Mammary epithelial cell (primary cell): ENCODE measurements at regions of chr4 and their contacts with region 1.

Region 1: GRCh38 chr4:113899271-113900070 is 80.0 kb downstream of the ARSJ start:
- DNase-seq: peak; percentile 45
- H3K4me3 ChIP-seq: no peak overlapping the region
- H3K27ac ChIP-seq: no peak overlapping the region
- H3K4me1 ChIP-seq: peaks cover 9% of the 10 kb centered on the region
- H3K27me3 ChIP-seq: no peaks in the 10 kb centered on the region
- CTCF ChIP-seq: no peak

Region 2: DNA sequence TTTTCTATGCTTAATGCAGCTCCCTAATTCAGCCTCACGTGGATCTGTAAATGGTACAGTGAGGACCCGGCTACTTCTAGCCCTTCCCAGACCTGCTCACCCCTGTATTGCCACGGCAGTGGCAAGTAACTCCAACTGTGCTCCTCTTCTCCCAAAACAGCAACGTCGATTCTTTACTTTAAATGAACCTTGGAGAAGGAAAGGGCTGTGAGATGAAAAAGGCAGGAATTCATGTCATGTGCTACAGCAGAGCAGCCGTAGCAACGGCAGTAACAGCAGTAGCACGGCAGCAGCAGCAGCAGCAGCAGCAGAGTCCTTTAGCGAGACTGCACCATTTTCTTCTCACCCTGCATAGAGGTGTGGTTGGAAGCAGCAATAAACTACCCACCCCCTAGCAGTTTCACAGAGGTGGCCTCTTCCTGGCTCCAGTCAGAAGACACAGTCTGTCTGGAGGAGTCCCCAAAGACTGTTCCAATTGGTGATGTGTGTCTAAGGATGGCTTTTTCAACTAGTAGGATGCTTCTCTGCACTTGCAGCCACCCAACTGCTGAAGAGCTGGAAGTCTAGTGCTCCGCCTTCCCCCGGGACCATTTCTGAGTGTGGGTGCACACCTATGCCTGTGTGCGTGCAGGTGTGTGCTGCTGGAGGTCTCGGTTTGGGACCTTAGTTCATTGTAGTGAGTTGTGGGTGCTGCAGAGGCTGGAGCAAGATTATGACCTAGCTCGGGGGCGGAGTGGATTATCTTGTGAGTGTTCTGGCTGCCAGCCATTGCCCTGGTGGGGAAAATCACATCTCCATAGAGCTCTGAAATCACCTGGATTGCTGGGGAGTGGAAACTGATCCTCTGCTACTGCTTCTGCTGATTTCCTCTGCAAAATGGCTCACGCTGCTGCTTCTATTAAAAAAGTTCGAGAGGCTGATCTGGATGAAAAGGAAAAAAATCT is 782.8 kb before region 1 on chr4:
- CTCF ChIA-PET with region 1: no interaction called
- dilution Hi-C with region 1: no loop called
- in situ Hi-C with region 1: no loop called
- intact Hi-C with region 1: no loop called
- DNase-seq: no peak
- H3K4me3 ChIP-seq: no peak overlapping the region
- H3K27ac ChIP-seq: no peak overlapping the region
- H3K4me1 ChIP-seq: no peaks in the 10 kb centered on the region
- H3K27me3 ChIP-seq: peaks cover 19% of the 10 kb centered on the region
- CTCF ChIP-seq: no peak

Region 3: GRCh38 chr4:113593400-113594230 is 305.9 kb before region 1 on chr4:
- CTCF ChIA-PET with region 1: no interaction called
- dilution Hi-C with region 1: no loop called
- in situ Hi-C with region 1: no loop called
- intact Hi-C with region 1: no loop called
- DNase-seq: no peak
- H3K4me3 ChIP-seq: no peak overlapping the region
- H3K27ac ChIP-seq: no peak overlapping the region
- H3K4me1 ChIP-seq: no peaks in the 10 kb centered on the region
- H3K27me3 ChIP-seq: no peaks in the 10 kb centered on the region
- CTCF ChIP-seq: no peak

Region 4: GRCh38 chr4:113773014-113773413 is 126.5 kb before region 1 on chr4:
- CTCF ChIA-PET with region 1: no interaction called
- dilution Hi-C with region 1: no loop called
- in situ Hi-C with region 1: no loop called
- intact Hi-C with region 1: no loop called
- DNase-seq: no peak
- H3K4me3 ChIP-seq: no peak overlapping the region
- H3K27ac ChIP-seq: no peak overlapping the region
- H3K4me1 ChIP-seq: no peaks in the 10 kb centered on the region
- H3K27me3 ChIP-seq: no peaks in the 10 kb centered on the region
- CTCF ChIP-seq: no peak

Region 5: GRCh38 chr4:114077610-114078009 is 178.1 kb after region 1 on chr4:
- CTCF ChIA-PET with region 1: no interaction called
- dilution Hi-C with region 1: no loop called
- in situ Hi-C with region 1: no loop called
- intact Hi-C with region 1: loop called (anchors 5 kb)
- DNase-seq: peak; percentile 73
- H3K4me3 ChIP-seq: no peak overlapping the region
- H3K27ac ChIP-seq: peak overlapping the region; percentile 19
- H3K4me1 ChIP-seq: peaks cover 13% of the 10 kb centered on the region
- H3K27me3 ChIP-seq: no peaks in the 10 kb centered on the region
- CTCF ChIP-seq: no peak

Region 6: GRCh38 chr4:114827651-114828050 is 928.2 kb after region 1 on chr4:
- CTCF ChIA-PET with region 1: no interaction called
- dilution Hi-C with region 1: no loop called
- in situ Hi-C with region 1: no loop called
- intact Hi-C with region 1: no loop called
- DNase-seq: no peak
- H3K4me3 ChIP-seq: no peak overlapping the region
- H3K27ac ChIP-seq: no peak overlapping the region
- H3K4me1 ChIP-seq: no peaks in the 10 kb centered on the region
- H3K27me3 ChIP-seq: no peaks in the 10 kb centered on the region
- CTCF ChIP-seq: no peak